ENCODE measurements at regions of chr10 and their contacts with region 1.

Region 1: GRCh38 chr10:98262571-98262970 is 5.4 kb downstream of the LOXL4 start:
- DNase-seq: peak; percentile 64 to 81
- ATAC-seq: peak; percentile 60 to 78
- H3K4me3 ChIP-seq: no peak overlapping the region
- H3K27ac ChIP-seq: no peak overlapping the region
- H3K4me1 ChIP-seq: peaks cover 12 to 13% of the 10 kb centered on the region in 2 donors
- H3K27me3 ChIP-seq: no peaks in the 10 kb centered on the region
- CTCF ChIP-seq: peak; percentile 62 to 78 (median 71)
- POLR2A ChIP-seq: no peak

Region 2: GRCh38 chr10:98295907-98296306 is 33.3 kb after region 1 on chr10:
- in situ Hi-C with region 1: no loop called
- intact Hi-C with region 1: no loop called
- DNase-seq: no peak
- ATAC-seq: peak in 1 of 2 donors; percentile 42
- H3K4me3 ChIP-seq: no peak overlapping the region
- H3K27ac ChIP-seq: no peak overlapping the region
- H3K4me1 ChIP-seq: peaks cover 5 to 19% of the 10 kb centered on the region in 2 donors
- H3K27me3 ChIP-seq: no peaks in the 10 kb centered on the region
- CTCF ChIP-seq: no peak
- POLR2A ChIP-seq: no peak

Region 3: DNA sequence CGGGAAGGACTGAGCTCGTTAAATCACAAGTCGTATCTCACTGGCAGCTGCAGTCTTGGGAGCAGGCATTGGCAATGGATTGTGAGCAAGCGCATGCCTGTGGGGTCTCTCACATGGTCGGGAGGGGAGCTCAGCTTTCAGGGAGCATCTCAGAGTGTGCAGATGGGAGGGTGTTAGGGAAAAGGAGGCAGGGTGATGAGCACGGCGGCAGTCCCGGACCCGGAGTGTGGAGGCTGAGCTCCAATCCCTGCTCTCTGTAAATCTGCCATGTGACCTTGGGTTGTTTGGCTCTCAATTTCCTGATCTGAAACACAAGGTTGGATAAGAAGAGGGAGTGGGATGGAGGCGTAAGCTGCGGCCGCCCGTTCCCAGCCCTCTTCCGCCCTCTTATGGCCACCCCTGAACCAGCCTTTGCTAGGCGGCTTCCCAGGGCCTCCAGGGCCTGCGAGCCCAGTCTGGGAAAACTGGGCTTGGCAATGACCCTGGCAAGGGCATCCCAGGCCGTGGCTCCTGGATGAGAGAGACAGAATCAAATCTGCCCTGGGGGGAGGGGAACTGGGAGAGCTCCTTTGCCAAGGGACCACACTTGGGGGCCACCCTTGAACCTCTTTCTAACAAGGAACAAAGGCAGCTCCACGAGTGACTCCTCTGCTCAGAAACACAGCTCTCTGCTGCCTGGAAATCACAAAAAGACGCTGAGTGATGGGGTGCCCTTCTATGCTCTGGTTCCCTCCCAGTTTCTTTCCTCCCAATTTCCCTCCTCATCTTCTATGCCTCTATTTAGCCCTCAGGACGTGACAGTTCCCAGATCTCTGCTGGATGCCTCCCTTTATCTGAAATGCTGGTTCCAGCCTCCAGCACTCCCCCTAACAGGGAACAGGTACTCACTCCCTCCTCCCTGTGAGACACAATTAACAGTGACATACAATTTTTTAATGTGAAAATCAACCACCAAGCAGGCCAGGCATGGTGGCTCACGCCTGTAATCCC is 47.1 kb after region 1 on chr10:
- in situ Hi-C with region 1: loop called in 1 of 4 experiments (anchors 5 kb)
- intact Hi-C with region 1: loop called (anchors 1 kb)
- DNase-seq: peak; percentile 53 to 69
- ATAC-seq: peak; percentile 75
- H3K4me3 ChIP-seq: no peak overlapping the region
- H3K27ac ChIP-seq: peak overlapping the region in 3 of 4 donors; percentile 2 to 32 (median 5)
- H3K4me1 ChIP-seq: peaks cover 19% of the 10 kb centered on the region in 2 donors
- H3K27me3 ChIP-seq: no peaks in the 10 kb centered on the region
- CTCF ChIP-seq: peak; percentile 74 to 89 (median 83)
- POLR2A ChIP-seq: no peak

Region 4: DNA sequence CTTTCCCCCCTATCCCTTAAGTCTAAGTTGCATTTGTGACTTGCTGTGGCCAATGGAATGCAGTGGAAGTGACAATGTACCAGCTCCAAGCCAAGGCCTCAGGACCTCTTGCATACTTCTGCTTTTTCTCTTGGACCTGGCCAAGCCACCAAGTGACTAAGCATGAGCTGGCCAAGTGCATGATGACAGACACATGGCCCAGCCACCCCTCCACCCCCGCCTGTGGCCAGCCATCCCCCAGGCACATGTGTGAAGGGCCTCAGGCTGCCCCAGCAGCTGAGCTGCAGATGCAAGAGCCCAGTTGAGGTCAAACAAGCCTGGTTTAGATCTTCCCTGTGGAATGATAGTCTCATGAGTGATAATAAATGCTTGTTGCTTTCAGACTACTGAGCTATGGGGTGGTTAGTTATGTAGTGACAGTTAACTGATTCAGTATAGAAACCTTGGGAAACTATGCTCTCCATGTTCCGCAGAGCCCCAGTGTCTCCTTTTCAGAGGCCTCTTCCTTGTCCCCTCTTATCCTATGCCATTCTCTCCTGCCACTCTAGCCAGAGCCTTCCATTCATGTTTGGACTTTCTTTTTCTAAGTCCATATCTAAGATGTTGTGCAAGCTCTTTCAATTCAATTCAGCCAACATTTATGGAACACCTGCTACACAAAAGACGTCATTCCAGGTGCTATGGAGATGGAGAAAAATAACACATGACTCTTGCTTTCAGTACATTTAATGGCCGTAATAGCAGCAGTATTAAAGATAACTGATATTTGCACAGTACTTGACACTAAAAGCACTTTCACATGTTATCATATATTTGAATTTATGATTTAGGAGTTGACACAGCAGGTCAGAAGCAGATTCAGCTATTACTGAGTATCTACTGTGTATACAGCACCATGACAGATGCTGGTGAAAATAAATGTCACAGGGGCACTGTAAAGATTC is 60.9 kb after region 1 on chr10:
- in situ Hi-C with region 1: loop called in 1 of 4 experiments (anchors 10 kb)
- intact Hi-C with region 1: no loop called
- DNase-seq: peak; percentile 85 to 92
- ATAC-seq: peak; percentile 84 to 94
- H3K4me3 ChIP-seq: no peak overlapping the region
- H3K27ac ChIP-seq: peak overlapping the region; percentile 52 to 81 (median 76)
- H3K4me1 ChIP-seq: peaks cover 4 to 26% of the 10 kb centered on the region in 2 donors
- H3K27me3 ChIP-seq: no peaks in the 10 kb centered on the region
- CTCF ChIP-seq: no peak
- POLR2A ChIP-seq: no peak

Region 5: DNA sequence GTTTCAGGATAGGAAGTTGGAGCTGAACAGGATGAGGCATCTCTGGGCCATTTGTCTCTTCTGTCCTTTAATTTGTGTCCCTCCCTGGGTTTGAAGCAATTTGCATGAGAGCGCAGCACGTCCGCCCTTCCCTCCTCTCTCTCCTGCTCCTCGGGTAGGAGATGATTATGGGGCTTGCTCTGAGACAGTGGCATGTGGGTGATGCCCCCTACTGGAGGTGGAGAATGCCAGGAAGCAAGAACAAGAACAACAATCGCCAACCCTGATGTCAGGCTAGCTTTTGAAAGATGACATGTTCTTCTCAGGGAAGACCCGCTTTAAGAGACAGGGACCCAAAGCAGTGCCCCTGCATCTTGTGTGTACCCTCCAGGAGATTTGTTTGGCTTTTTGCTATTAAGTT is 69.3 kb after region 1 on chr10:
- in situ Hi-C with region 1: loop called in 1 of 4 experiments (anchors 10 kb)
- intact Hi-C with region 1: loop called (anchors 1 kb)
- DNase-seq: no peak
- ATAC-seq: peak in 1 of 2 donors; percentile 65
- H3K4me3 ChIP-seq: no peak overlapping the region
- H3K27ac ChIP-seq: no peak overlapping the region
- H3K4me1 ChIP-seq: no peaks in the 10 kb centered on the region
- H3K27me3 ChIP-seq: no peaks in the 10 kb centered on the region
- CTCF ChIP-seq: peak in 2 of 5 experiments; percentile 40 to 49
- POLR2A ChIP-seq: no peak

Region 6: GRCh38 chr10:98446661-98447221 is 184.2 kb after region 1 on chr10 and contains the start of gene HPS1:
- in situ Hi-C with region 1: loop called in 1 of 4 experiments (anchors 25 kb)
- intact Hi-C with region 1: no loop called
- DNase-seq: peak; percentile 45 to 63
- ATAC-seq: peak; percentile 82 to 83
- H3K4me3 ChIP-seq: peak within 1 kb of the TSS; percentile 72 to 87 (median 78)
- H3K27ac ChIP-seq: peak within 1 kb of the TSS; percentile 86 to 95 (median 90)
- H3K4me1 ChIP-seq: peaks cover 3 to 4% of the 10 kb centered on the region in 2 donors
- H3K27me3 ChIP-seq: no peaks in the 10 kb centered on the region
- CTCF ChIP-seq: no peak
- POLR2A ChIP-seq: peak; percentile 82 to 90
- total RNA-seq, gene HPS1: 10.6 to 26.0 (median 18.3) TPM

Region 7: DNA sequence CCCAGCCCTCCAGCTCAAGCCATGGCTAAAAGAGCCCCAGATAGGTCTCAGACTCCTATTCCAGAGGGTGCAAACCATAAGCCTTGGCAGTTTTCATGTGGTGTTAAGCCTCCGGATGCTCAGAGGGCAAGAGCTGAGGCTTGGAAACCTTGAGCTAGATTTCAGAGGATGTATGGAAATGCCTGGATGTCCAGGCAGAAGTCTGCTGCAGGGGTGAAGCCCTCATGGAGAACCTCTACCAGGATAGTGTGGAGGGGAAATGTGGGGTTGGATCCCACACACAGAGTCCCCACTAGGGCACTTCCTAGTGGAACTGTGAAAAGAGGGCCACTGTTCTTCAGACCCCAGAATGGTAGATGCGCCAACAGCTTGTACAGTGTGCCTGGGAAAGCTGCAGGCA is 986.3 kb after region 1 on chr10:
- in situ Hi-C with region 1: no loop called
- intact Hi-C with region 1: loop called (anchors 10 kb)
- DNase-seq: no peak
- ATAC-seq: no peak
- H3K4me3 ChIP-seq: no peak overlapping the region
- H3K27ac ChIP-seq: no peak overlapping the region
- H3K4me1 ChIP-seq: no peaks in the 10 kb centered on the region
- H3K27me3 ChIP-seq: no peaks in the 10 kb centered on the region
- CTCF ChIP-seq: no peak
- POLR2A ChIP-seq: no peak